Sigmoid colon (tissue), 7 donors: ENCODE measurements at regions of chr2 and their contacts with region 1.

Region 1: DNA sequence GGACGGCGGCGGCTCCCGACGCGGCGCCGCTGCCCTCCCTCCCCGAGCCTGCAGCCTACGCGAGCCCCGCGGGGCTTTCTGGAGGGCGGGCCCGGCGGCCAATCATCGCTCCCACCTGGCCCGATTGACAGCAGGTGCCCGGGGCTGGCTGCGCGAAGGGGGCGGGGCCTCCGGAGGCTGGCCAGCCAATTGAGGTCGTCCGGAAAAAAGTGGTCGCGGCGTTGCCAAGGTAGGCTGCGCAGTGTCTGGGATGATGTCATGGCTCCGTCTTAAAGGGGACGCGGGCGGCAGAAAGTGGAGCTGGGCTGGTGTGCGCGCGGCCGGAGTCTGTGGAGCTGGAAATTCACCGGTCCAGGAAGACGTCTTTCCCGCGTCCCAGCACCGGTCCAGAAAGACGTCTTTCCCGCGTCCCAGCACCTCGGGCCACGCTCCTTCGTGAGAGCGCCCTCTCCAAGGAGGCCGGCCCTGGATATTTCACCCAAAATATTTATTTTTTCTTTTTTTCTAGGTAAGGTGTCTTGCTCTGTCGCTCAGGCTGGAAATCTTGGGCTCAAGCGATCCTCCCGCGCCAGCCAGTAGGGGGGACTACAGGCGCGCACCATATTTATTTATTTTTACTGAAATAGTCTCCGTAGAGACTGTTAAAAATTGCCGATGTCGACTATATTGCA is at the start of gene ACTR1B:
- DNase-seq: peak; percentile 99
- H3K4me3 ChIP-seq: peak within 1 kb of the TSS; percentile 65 to 83 (median 76)
- H3K27ac ChIP-seq: peak within 1 kb of the TSS; percentile 93 to 98 (median 97)
- H3K4me1 ChIP-seq: peaks cover 0 to 38% (median 28%) of the 10 kb centered on the region in 4 donors
- H3K27me3 ChIP-seq: no peaks in the 10 kb centered on the region
- CTCF ChIP-seq: peak; percentile 62 to 72 (median 64)
- EP300 ChIP-seq: peak in 1 of 4 donors; percentile 66
- POLR2A ChIP-seq: peak; percentile 62 to 82
- total RNA-seq, gene ACTR1B: 63.0 to 85.3 (median 77.6) TPM

Region 2: GRCh38 chr2:97645695-97646629 is 18.1 kb before region 1 on chr2 and contains the start of gene COX5B:
- intact Hi-C with region 1: loop called (anchors 1 kb)
- DNase-seq: peak; percentile 100
- H3K4me3 ChIP-seq: peak within 1 kb of the TSS; percentile 63 to 96 (median 82)
- H3K27ac ChIP-seq: peak within 1 kb of the TSS; percentile 89 to 95 (median 91)
- H3K4me1 ChIP-seq: peaks cover 0 to 21% (median 18%) of the 10 kb centered on the region in 4 donors
- H3K27me3 ChIP-seq: no peaks in the 10 kb centered on the region
- CTCF ChIP-seq: no peak
- EP300 ChIP-seq: peak in 1 of 4 donors; percentile 66
- POLR2A ChIP-seq: peak; percentile 82 to 87
- total RNA-seq, gene COX5B: 358 to 796 (median 595) TPM

Region 3: DNA sequence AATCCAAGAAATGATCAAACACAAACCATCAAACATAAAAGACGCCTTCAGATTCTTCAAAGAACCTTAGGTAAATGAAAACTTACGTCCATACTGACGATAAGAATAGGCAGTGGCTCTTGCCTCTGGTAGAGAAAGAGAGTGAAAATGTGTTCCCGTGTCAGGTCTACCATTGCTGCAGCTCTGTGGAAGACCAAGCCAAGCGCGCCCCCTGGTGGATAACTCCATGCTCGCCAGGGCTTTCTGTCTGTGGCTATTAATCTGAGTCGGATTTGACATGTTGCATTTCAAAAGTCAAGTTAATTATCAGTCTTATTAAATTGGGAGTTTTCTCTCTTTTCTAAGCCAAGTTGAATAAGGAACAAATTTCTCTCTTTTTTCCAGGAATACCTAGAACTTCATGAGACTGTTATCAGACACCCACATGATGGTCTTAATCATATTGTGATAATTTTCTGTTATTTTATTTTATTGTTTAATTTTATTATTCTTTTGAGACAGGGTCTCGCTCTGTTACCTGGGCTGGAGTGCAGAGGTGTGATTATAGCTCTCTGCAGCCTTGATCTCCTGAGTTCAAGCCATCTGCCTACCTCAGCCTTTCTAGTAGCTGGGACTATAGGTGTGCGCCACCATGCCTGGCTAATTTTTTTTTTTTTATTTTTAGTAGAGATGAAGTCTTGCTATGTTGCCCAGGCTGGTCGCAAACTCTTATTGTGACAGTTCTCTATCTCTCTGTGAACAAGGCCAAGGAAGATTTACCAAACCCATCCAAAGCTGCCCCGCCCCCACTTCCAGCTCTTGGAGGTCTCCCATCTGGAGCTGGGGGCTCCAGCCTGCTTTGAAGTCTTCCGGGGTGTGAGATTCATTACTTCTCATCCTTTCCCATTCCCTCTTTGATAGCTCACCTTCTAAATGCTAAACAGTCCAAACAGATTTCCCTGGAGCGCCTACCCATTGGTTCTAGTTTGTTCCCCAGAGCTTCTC is 33.4 kb after region 1 on chr2:
- intact Hi-C with region 1: loop called (anchors 1 kb)
- DNase-seq: peak; percentile 94
- H3K4me3 ChIP-seq: no peak overlapping the region
- H3K27ac ChIP-seq: no peak overlapping the region
- H3K4me1 ChIP-seq: peaks cover 0 to 4% (median 0%) of the 10 kb centered on the region in 4 donors
- H3K27me3 ChIP-seq: no peaks in the 10 kb centered on the region
- CTCF ChIP-seq: peak; percentile 86 to 96 (median 95)
- EP300 ChIP-seq: no peak
- POLR2A ChIP-seq: no peak

Region 4: GRCh38 chr2:98608116-98608999 is 944.3 kb after region 1 on chr2 and contains the starts of genes COA5 and UNC50:
- intact Hi-C with region 1: loop called (anchors 10 kb)
- DNase-seq: peak; percentile 94
- H3K4me3 ChIP-seq: peak within 1 kb of the TSS; percentile 56 to 95 (median 93)
- H3K27ac ChIP-seq: peak within 1 kb of the TSS; percentile 93 to 97 (median 94)
- H3K4me1 ChIP-seq: peaks cover 0 to 60% (median 48%) of the 10 kb centered on the region in 4 donors
- H3K27me3 ChIP-seq: no peaks in the 10 kb centered on the region
- CTCF ChIP-seq: no peak
- EP300 ChIP-seq: peak in 1 of 4 donors; percentile 36
- POLR2A ChIP-seq: peak; percentile 71 to 83
- total RNA-seq, gene COA5: 35.5 to 53.8 (median 43.4) TPM
- total RNA-seq, gene UNC50: 39.4 to 61.0 (median 52.7) TPM